ENCODE measurements at regions of chr19 and their contacts with region 1.

Region 1: GRCh38 chr19:39679056-39679790 is 23.5 kb downstream of the LGALS16 start:
- DNase-seq: peak; percentile 86
- ATAC-seq: peak; percentile 86
- H3K4me3 ChIP-seq: peak overlapping the region; percentile 86
- H3K27ac ChIP-seq: peak overlapping the region; percentile 98
- H3K4me1 ChIP-seq: peaks cover 61% of the 10 kb centered on the region
- H3K27me3 ChIP-seq: no peaks in the 10 kb centered on the region
- CTCF ChIP-seq: no peak
- EP300 ChIP-seq: peak; percentile 6 to 81
- POLR2A ChIP-seq: 0 out of 2 replicates have a peak, but pooled peaks have one; percentile 6
- RAD21 ChIP-seq: 0 out of 2 replicates have a peak, but pooled peaks have one; percentile 18

Region 2: GRCh38 chr19:39704181-39705044 is 25.2 kb after region 1 on chr19 and contains the start of gene LGALS14:
- CTCF ChIA-PET with region 1: interaction called, 103 read pairs
- POLR2A ChIA-PET with region 1: interaction called, 16 read pairs
- RAD21 ChIA-PET with region 1: interaction called, 78 read pairs
- SMC1A ChIA-PET with region 1: interaction called, 113 read pairs
- in situ Hi-C with region 1: no loop called
- intact Hi-C with region 1: loop called (anchors 2 kb)
- DNase-seq: no peak
- ATAC-seq: peak; percentile 68
- H3K4me3 ChIP-seq: peak within 1 kb of the TSS; percentile 58
- H3K27ac ChIP-seq: peak within 1 kb of the TSS; percentile 88
- H3K4me1 ChIP-seq: peaks cover 91% of the 10 kb centered on the region
- H3K27me3 ChIP-seq: no peaks in the 10 kb centered on the region
- CTCF ChIP-seq: no peak
- EP300 ChIP-seq: 0 out of 4 replicates have a peak, but pooled peaks of 1 of the 2 experiments have one; percentile 33
- POLR2A ChIP-seq: peak; percentile 62
- RAD21 ChIP-seq: no peak
- polyA plus RNA-seq, gene LGALS14: 21.0 to 34.6 TPM

Region 3: GRCh38 chr19:39759457-39760184 is 80.4 kb after region 1 on chr19:
- CTCF ChIA-PET with region 1: interaction called, 29 read pairs
- POLR2A ChIA-PET with region 1: interaction called, 6 read pairs
- RAD21 ChIA-PET with region 1: interaction called, 11 read pairs
- SMC1A ChIA-PET with region 1: interaction called, 19 read pairs
- in situ Hi-C with region 1: no loop called
- intact Hi-C with region 1: no loop called
- DNase-seq: peak; percentile 65
- ATAC-seq: peak; percentile 97
- H3K4me3 ChIP-seq: peak overlapping the region; percentile 15; the same call in 1 of the 2 replicates
- H3K27ac ChIP-seq: peak overlapping the region; percentile 68
- H3K4me1 ChIP-seq: peaks cover 22% of the 10 kb centered on the region
- H3K27me3 ChIP-seq: no peaks in the 10 kb centered on the region
- CTCF ChIP-seq: no peak
- EP300 ChIP-seq: peak; percentile 30 to 65; a peak in 3 of 4 replicates
- POLR2A ChIP-seq: no peak
- RAD21 ChIP-seq: no peak

Region 4: DNA sequence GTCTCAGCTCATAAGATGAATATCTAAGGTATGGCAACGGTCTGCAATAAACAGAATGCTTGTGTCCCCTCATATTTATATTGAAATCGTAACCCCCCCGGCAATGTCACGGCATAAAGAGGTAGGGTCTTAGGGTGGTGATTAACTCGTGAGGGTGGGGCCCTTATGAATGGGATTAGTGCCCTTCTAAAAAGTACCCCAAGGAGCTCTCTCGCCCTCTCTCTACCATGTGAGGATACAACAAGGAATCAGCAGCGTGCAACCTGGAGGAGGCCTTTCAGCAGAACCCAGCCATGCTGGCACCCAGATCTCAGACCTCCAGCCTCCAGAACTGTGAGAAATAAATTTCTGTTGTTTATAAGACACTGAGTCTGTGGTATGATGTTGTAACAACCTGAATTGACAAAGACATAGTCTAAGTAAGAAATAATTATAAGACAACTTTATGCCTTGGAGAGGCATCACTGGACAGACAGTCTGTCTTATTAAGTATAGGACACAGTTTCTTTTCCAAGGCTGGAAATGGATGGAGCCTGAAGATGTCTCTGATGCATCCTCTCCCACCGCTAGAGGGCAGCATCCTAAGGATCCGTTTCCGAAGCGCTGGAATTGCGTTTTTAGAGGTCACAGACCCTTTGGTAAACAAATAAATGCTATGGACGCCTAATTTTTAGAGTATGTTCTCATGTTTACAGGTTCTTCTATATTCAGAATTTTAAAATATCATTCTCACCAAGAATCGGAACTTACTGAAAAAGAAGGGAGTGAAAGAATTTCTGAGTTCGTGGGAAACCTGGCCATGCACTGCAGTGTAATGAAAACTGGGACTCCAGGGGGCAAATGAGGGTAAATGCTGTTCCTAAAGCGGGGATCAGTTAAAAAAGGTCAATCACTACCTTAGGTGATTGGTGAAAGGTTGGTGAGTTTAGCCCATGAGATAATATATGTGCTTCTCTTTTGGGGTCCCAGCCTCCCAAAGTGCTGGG is 86.2 kb after region 1 on chr19:
- CTCF ChIA-PET with region 1: interaction called, 136 read pairs
- POLR2A ChIA-PET with region 1: no interaction called
- RAD21 ChIA-PET with region 1: interaction called, 12 read pairs
- SMC1A ChIA-PET with region 1: interaction called, 129 read pairs
- in situ Hi-C with region 1: no loop called
- intact Hi-C with region 1: loop called (anchors 1 kb)
- DNase-seq: no peak
- ATAC-seq: no peak
- H3K4me3 ChIP-seq: no peak overlapping the region
- H3K27ac ChIP-seq: no peak overlapping the region
- H3K4me1 ChIP-seq: peaks cover 5% of the 10 kb centered on the region
- H3K27me3 ChIP-seq: no peaks in the 10 kb centered on the region
- CTCF ChIP-seq: peak; percentile 29 to 79 (median 56); a peak in 5 of 6 replicates
- EP300 ChIP-seq: no peak
- POLR2A ChIP-seq: no peak
- RAD21 ChIP-seq: 0 out of 2 replicates have a peak, but pooled peaks have one; percentile 22

Region 5: GRCh38 chr19:39833464-39834286 is 154.5 kb after region 1 on chr19 and contains the start of gene DYRK1B:
- CTCF ChIA-PET with region 1: interaction called, 10 read pairs
- POLR2A ChIA-PET with region 1: interaction called, 4 read pairs
- RAD21 ChIA-PET with region 1: interaction called, 29 read pairs
- SMC1A ChIA-PET with region 1: interaction called, 20 read pairs
- in situ Hi-C with region 1: loop called (anchors 5 kb)
- intact Hi-C with region 1: no loop called
- DNase-seq: peak; percentile 92
- ATAC-seq: peak; percentile 98
- H3K4me3 ChIP-seq: peak within 1 kb of the TSS; percentile 97
- H3K27ac ChIP-seq: peak within 1 kb of the TSS; percentile 51
- H3K4me1 ChIP-seq: peaks cover 15% of the 10 kb centered on the region
- H3K27me3 ChIP-seq: no peaks in the 10 kb centered on the region
- CTCF ChIP-seq: no peak
- EP300 ChIP-seq: peak in 1 of 2 experiments; percentile 70; a peak in 2 of 4 replicates
- POLR2A ChIP-seq: peak; percentile 69
- RAD21 ChIP-seq: no peak
- polyA plus RNA-seq, gene DYRK1B: 0.07 TPM in 1 of 2 experiments, not detected in the other

Region 6: DNA sequence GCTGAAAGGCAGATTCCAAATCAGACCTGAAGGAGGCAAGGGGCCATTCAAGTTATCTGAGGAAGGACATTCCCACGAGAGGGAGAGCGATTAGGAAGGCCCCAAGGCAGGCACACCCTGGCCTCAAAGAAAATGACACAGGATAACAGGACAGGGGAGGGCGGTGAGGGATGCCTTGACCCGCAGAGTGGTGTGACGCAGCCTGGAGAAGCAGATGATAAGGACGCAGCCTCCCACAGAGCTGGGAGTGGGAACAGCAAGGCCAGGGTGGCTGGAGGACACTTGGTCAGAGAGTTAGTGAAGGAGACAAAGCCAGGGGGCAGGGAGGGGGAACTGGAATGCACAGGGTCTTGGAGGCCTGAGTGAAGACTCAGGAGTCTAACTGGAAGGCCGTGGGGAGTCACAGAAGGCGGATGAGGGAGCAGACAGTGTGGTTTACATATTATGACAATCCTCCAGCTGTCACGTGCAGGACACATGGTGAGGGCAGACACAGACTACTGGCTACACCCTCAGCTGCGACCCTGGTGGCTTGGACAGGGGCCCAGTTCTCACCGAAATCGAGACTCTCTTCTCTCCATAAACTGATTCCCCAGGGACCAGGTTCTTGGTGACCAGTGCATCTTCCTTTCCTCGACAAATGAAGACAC is 160.6 kb after region 1 on chr19:
- CTCF ChIA-PET with region 1: interaction called, 335 read pairs
- POLR2A ChIA-PET with region 1: interaction called, 25 read pairs
- RAD21 ChIA-PET with region 1: interaction called, 234 read pairs
- SMC1A ChIA-PET with region 1: interaction called, 266 read pairs
- in situ Hi-C with region 1: loop called (anchors 5 kb)
- intact Hi-C with region 1: loop called (anchors 1 kb)
- DNase-seq: no peak
- ATAC-seq: no peak
- H3K4me3 ChIP-seq: no peak overlapping the region
- H3K27ac ChIP-seq: no peak overlapping the region
- H3K4me1 ChIP-seq: peaks cover 10% of the 10 kb centered on the region
- H3K27me3 ChIP-seq: no peaks in the 10 kb centered on the region
- CTCF ChIP-seq: no peak
- EP300 ChIP-seq: no peak
- POLR2A ChIP-seq: no peak
- RAD21 ChIP-seq: no peak